ENCODE measurements at regions of chr11 and their contacts with region 1.

Region 1: DNA sequence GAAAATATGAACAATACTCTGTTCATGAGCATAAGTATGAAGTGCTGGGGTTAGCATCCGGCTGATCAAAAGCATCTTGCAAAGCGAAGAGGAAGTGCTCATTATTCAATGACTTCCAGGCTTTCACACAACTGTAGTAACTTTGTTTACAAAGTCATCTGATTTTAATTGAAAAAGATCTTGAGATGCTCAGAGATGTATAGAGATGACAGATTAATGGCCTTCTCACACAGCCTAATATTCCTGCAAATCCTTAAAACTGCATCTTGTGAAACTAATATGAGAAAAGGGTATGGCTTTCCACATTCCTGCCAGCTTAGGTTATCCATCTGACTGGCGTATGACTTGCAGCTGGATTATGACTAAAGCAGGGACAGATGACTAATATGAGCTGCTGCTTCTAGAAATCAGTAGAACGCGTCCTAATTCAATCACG is 125.4 kb downstream of the CASP12 start:
- DNase-seq: peak; percentile 93
- ATAC-seq: peak; percentile 98
- H3K4me3 ChIP-seq: no peak overlapping the region
- H3K27ac ChIP-seq: peak overlapping the region; percentile 27
- H3K4me1 ChIP-seq: peaks cover 38% of the 10 kb centered on the region
- H3K27me3 ChIP-seq: no peaks in the 10 kb centered on the region
- CTCF ChIP-seq: no peak

Region 2: DNA sequence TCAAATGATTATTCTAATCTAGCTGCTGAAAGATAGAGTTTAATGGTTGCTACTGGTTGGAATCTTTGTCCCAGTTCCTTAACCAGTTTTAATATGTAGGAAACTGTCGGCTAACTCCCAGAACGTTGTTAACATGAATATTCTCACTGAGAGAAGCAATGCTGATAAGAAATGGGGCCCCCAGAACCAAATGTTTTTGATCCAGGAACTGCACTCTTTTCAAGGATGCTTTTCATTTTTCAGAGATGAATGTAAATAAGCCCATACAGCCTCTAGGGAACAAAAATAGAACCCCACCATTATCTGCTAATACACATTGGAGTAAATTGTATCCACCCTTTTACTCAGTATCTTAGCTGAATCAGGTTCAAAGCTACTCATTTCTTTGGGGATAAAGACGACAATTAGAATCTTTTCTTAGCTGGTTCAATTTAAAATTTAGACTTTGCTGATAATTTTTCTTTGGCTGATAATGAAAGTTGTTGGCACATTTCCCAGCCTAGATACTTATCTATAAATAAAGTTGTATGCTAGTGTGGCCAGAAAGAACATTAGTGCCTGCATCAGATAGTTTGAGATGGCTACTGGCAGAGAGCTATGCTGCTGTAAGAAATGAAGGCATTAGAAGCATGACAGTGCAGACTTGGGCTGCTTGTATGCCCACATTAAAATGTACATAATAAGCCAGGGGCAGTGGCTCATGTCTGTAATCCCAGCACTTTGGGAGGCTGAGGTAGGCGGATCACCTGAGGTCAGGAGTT is 285.6 kb before region 1 on chr11:
- CTCF ChIA-PET with region 1: no interaction called
- POLR2A ChIA-PET with region 1: no interaction called
- intact Hi-C with region 1: no loop called
- DNase-seq: no peak
- ATAC-seq: no peak
- H3K4me3 ChIP-seq: no peak overlapping the region
- H3K27ac ChIP-seq: no peak overlapping the region
- H3K4me1 ChIP-seq: no peaks in the 10 kb centered on the region
- H3K27me3 ChIP-seq: no peaks in the 10 kb centered on the region
- CTCF ChIP-seq: no peak

Region 3: GRCh38 chr11:104609311-104610085 is 163.3 kb before region 1 on chr11:
- CTCF ChIA-PET with region 1: no interaction called
- POLR2A ChIA-PET with region 1: no interaction called
- intact Hi-C with region 1: loop called (anchors 5 kb)
- DNase-seq: peak; percentile 75
- ATAC-seq: peak; percentile 98
- H3K4me3 ChIP-seq: no peak overlapping the region
- H3K27ac ChIP-seq: no peak overlapping the region
- H3K4me1 ChIP-seq: no peaks in the 10 kb centered on the region
- H3K27me3 ChIP-seq: no peaks in the 10 kb centered on the region
- CTCF ChIP-seq: peak; percentile 93

Region 4: GRCh38 chr11:104623518-104623917 is 149.3 kb before region 1 on chr11:
- CTCF ChIA-PET with region 1: no interaction called
- POLR2A ChIA-PET with region 1: no interaction called
- intact Hi-C with region 1: loop called (anchors 5 kb)
- DNase-seq: peak; percentile 89
- ATAC-seq: peak; percentile 97
- H3K4me3 ChIP-seq: peak overlapping the region; percentile 3; the same call in 1 of the 2 replicates
- H3K27ac ChIP-seq: peak overlapping the region; percentile 16
- H3K4me1 ChIP-seq: peaks cover 26% of the 10 kb centered on the region
- H3K27me3 ChIP-seq: no peaks in the 10 kb centered on the region
- CTCF ChIP-seq: no peak

Region 5: DNA sequence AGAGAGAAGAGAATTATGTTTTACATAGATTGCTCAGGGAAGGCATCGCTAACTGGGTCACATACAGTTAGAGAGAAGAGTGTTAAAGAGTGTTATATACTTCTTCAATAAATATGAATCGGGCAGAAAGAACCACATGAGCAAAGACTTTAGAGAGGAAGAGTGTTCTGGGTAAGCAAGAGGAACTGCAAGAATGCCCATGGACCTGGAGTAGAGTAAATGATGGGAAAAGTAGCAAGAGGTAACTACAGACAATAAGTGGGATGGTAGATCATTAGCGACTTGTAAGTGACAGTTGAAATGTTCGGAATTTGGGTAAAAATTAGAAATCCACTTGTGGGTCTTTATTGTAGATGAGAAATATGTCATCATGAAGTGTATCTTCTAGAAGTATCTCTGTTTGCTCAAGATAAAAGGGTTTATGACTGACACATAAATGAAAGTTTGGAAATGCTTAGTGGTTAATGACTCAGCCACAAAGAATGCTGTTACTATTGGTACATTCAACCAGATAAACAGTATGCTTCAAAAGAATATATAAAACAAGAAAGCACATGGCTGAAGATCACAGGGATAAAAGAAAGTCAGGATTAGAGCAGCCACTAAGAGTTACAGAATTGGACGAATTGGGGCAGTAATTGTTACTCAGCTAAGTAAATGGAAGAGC is 103.9 kb before region 1 on chr11:
- CTCF ChIA-PET with region 1: no interaction called
- POLR2A ChIA-PET with region 1: no interaction called
- intact Hi-C with region 1: loop called (anchors 5 kb)
- DNase-seq: peak; percentile 98
- ATAC-seq: peak; percentile 93
- H3K4me3 ChIP-seq: no peak overlapping the region
- H3K27ac ChIP-seq: peak overlapping the region; percentile 49
- H3K4me1 ChIP-seq: peaks cover 36% of the 10 kb centered on the region
- H3K27me3 ChIP-seq: no peaks in the 10 kb centered on the region
- CTCF ChIP-seq: no peak

Region 6: DNA sequence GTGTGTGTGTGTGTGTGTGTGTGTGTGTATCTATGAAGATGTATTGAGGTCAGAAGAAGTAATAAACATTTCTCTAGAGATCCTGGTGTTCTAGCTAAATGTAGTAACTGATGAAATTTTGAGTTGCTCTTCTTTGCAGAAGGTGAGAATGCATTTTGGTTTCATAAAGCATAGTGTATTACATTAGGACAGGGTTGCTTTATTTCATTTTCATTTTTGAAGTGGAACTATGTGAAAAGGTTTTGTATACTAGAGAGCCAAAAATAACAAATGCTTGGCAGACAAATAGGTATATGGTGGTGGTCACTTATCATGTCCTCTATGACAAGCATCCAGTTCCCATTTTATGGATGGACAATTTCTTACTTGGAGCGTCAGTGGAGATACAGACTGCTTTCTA is 26.4 kb after region 1 on chr11:
- CTCF ChIA-PET with region 1: no interaction called
- POLR2A ChIA-PET with region 1: no interaction called
- intact Hi-C with region 1: no loop called
- DNase-seq: no peak
- ATAC-seq: no peak
- H3K4me3 ChIP-seq: no peak overlapping the region
- H3K27ac ChIP-seq: no peak overlapping the region
- H3K4me1 ChIP-seq: no peaks in the 10 kb centered on the region
- H3K27me3 ChIP-seq: no peaks in the 10 kb centered on the region
- CTCF ChIP-seq: no peak